B cell (primary cell): ENCODE measurements at regions of chr5 and their contacts with region 1.

Region 1: GRCh38 chr5:109439590-109439989 is 29.8 kb upstream of the PJA2 start:
- DNase-seq: no peak
- ATAC-seq: no peak
- H3K4me3 ChIP-seq: no peak overlapping the region
- H3K4me3 Mint-ChIP-seq: no peak overlapping the region
- H3K27ac ChIP-seq: no peak overlapping the region
- H3K27ac Mint-ChIP-seq: no peak overlapping the region
- H3K4me1 ChIP-seq: no peaks in the 10 kb centered on the region
- H3K4me1 Mint-ChIP-seq: no peaks in the 10 kb centered on the region
- H3K27me3 ChIP-seq: no peaks in the 10 kb centered on the region
- H3K27me3 Mint-ChIP-seq: peaks cover 4% of the 10 kb centered on the region
- CTCF ChIP-seq: no peak

Region 2: GRCh38 chr5:108642167-108642906 is 797.3 kb before region 1 on chr5:
- CTCF ChIA-PET with region 1: interaction called, 6 read pairs
- POLR2A ChIA-PET with region 1: no interaction called
- intact Hi-C with region 1: loop called (anchors 1 kb)
- DNase-seq: peak; percentile 64
- ATAC-seq: peak; percentile 79
- H3K4me3 ChIP-seq: no peak overlapping the region
- H3K4me3 Mint-ChIP-seq: no peak overlapping the region
- H3K27ac ChIP-seq: no peak overlapping the region
- H3K27ac Mint-ChIP-seq: no peak overlapping the region
- H3K4me1 ChIP-seq: peaks cover 0 to 3% of the 10 kb centered on the region in 2 donors
- H3K4me1 Mint-ChIP-seq: peaks cover 2% of the 10 kb centered on the region
- H3K27me3 ChIP-seq: peaks cover 0 to 4% (median 0%) of the 10 kb centered on the region in 4 experiments
- H3K27me3 Mint-ChIP-seq: peaks cover 11% of the 10 kb centered on the region
- CTCF ChIP-seq: peak; percentile 83

Region 3: DNA sequence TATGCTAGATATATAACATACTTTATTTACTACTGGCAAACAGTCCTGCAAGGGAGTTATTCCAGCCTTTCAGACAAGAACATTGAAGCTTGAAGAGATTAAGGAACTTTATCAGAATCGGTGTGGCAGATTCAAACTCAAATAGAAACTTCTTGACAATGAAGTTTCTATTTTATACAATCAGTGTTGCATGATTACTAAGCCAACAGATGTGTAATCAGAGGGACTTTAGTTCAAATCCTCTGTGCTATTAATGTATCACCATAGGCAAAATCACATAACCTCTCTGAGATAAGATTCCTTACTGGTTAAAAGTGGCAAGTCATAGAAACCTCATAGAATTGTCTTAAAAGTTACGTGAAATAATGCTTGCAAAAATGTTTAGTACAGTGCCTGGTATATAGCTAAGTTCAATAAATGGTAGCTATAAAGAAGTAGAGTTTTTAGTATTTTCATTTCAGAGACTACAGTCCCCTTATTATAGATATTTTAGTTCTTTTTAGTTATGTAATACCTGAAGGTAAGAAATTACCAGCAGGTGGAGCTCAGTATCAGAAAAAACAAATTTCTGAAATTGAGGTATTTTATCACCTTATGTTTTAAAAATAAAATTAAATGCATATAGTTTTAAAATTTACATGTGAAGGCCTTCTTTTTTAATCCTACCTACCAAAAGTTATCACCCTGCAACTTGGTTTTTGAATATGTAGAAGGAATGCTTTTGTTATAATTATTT is 519.8 kb before region 1 on chr5:
- CTCF ChIA-PET with region 1: interaction called, 12 read pairs
- POLR2A ChIA-PET with region 1: no interaction called
- intact Hi-C with region 1: loop called (anchors 2 kb)
- DNase-seq: no peak
- ATAC-seq: no peak
- H3K4me3 ChIP-seq: no peak overlapping the region
- H3K4me3 Mint-ChIP-seq: no peak overlapping the region
- H3K27ac ChIP-seq: no peak overlapping the region
- H3K27ac Mint-ChIP-seq: no peak overlapping the region
- H3K4me1 ChIP-seq: no peaks in the 10 kb centered on the region
- H3K4me1 Mint-ChIP-seq: no peaks in the 10 kb centered on the region
- H3K27me3 ChIP-seq: no peaks in the 10 kb centered on the region
- H3K27me3 Mint-ChIP-seq: no peaks in the 10 kb centered on the region
- CTCF ChIP-seq: peak; percentile 36

Region 4: DNA sequence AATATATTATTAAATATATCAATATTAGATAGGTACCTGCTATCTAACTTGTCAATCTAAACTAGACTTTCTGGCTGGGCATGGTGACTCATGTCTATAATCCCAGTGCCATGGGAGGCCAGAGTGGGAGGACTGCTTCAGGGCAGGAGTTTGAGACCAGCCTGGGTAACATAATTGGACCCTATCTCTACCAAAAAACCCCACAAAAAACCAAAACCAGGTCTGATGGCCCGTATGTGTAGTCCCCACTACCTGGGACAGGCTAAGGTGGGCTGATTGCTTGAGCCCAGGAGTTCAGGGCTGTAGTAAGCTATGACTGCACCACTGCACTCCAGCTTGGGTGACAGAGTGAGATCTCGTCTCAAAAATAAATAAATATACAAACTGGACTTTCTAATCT is 84.8 kb before region 1 on chr5:
- CTCF ChIA-PET with region 1: no interaction called
- POLR2A ChIA-PET with region 1: no interaction called
- intact Hi-C with region 1: loop called (anchors 5 kb)
- DNase-seq: no peak
- ATAC-seq: no peak
- H3K4me3 ChIP-seq: no peak overlapping the region
- H3K4me3 Mint-ChIP-seq: no peak overlapping the region
- H3K27ac ChIP-seq: no peak overlapping the region
- H3K27ac Mint-ChIP-seq: no peak overlapping the region
- H3K4me1 ChIP-seq: no peaks in the 10 kb centered on the region
- H3K4me1 Mint-ChIP-seq: no peaks in the 10 kb centered on the region
- H3K27me3 ChIP-seq: no peaks in the 10 kb centered on the region
- H3K27me3 Mint-ChIP-seq: no peaks in the 10 kb centered on the region
- CTCF ChIP-seq: no peak

Region 5: DNA sequence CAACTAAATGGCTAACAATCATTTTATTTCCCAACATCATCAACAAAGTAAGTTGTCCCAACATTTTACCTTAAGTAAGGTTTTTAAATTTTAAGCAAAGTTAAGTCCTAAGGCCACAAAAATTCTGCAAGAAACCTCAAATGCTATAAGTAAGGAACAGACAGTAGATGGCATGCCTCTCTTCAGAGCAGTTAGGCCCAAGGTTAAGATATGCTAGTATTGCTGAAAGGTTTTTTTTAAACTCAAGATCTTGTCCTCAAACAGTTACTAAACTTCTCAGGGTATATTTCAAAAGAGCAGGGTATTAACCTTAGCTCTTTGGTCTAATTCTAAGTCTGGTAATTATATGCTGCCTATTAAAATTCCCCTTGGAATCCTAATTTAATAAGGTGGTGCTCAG is 65.0 kb before region 1 on chr5:
- CTCF ChIA-PET with region 1: interaction called, 6 read pairs
- POLR2A ChIA-PET with region 1: no interaction called
- intact Hi-C with region 1: loop called (anchors 5 kb)
- DNase-seq: no peak
- ATAC-seq: no peak
- H3K4me3 ChIP-seq: no peak overlapping the region
- H3K4me3 Mint-ChIP-seq: no peak overlapping the region
- H3K27ac ChIP-seq: no peak overlapping the region
- H3K27ac Mint-ChIP-seq: no peak overlapping the region
- H3K4me1 ChIP-seq: no peaks in the 10 kb centered on the region
- H3K4me1 Mint-ChIP-seq: peaks cover 18% of the 10 kb centered on the region
- H3K27me3 ChIP-seq: no peaks in the 10 kb centered on the region
- H3K27me3 Mint-ChIP-seq: no peaks in the 10 kb centered on the region
- CTCF ChIP-seq: peak; percentile 10

Region 6: GRCh38 chr5:109479260-109479860 is 39.8 kb after region 1 on chr5:
- CTCF ChIA-PET with region 1: no interaction called
- POLR2A ChIA-PET with region 1: no interaction called
- intact Hi-C with region 1: no loop called
- DNase-seq: peak; percentile 22
- ATAC-seq: no peak
- H3K4me3 ChIP-seq: no peak overlapping the region
- H3K4me3 Mint-ChIP-seq: no peak overlapping the region
- H3K27ac ChIP-seq: no peak overlapping the region
- H3K27ac Mint-ChIP-seq: no peak overlapping the region
- H3K4me1 ChIP-seq: peaks cover 0 to 4% of the 10 kb centered on the region in 2 donors
- H3K4me1 Mint-ChIP-seq: peaks cover 1% of the 10 kb centered on the region
- H3K27me3 ChIP-seq: no peaks in the 10 kb centered on the region
- H3K27me3 Mint-ChIP-seq: peaks cover 10% of the 10 kb centered on the region
- CTCF ChIP-seq: peak; percentile 59

Region 7: DNA sequence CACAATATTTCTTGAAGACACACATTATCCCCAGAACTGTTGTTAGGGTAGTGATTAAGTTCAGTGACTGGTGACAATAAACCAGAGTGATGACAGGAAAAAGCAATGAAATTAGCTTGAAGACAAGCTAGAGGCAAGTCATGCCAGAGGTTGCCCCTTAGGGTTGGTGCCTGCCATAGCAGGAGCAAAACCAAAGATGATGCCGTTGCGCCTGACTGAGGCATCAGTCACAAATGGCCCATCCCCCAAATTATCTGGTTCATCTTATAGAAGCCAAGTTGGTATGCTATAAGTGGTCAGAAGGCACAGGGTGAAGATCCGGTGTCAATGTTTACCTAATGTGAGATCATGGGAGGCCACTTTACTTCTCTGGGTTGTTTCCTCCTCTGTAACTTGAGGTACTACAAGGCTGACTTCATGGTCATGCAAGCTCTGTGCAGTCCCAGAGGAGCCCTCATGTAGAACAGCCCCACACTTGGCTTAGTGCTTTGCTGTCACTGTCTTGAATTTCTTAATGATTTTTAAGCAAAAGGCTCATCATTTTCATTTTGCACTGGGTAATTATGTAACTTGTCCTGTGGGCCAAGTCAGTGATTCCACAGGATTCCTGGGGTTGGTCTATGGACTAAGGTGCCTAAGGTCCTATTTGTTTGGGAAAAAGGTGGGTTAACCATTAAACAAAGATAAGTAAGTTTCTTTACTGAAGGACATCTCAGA is 461.5 kb after region 1 on chr5:
- CTCF ChIA-PET with region 1: no interaction called
- POLR2A ChIA-PET with region 1: no interaction called
- intact Hi-C with region 1: no loop called
- DNase-seq: no peak
- ATAC-seq: no peak
- H3K4me3 ChIP-seq: no peak overlapping the region
- H3K4me3 Mint-ChIP-seq: no peak overlapping the region
- H3K27ac ChIP-seq: no peak overlapping the region
- H3K27ac Mint-ChIP-seq: no peak overlapping the region
- H3K4me1 ChIP-seq: no peaks in the 10 kb centered on the region
- H3K4me1 Mint-ChIP-seq: no peaks in the 10 kb centered on the region
- H3K27me3 ChIP-seq: no peaks in the 10 kb centered on the region
- H3K27me3 Mint-ChIP-seq: no peaks in the 10 kb centered on the region
- CTCF ChIP-seq: no peak